Mammary epithelial cell (primary cell): ENCODE measurements at regions of chr20 and their contacts with region 1.

Region 1: GRCh38 chr20:324177-325044 is 941 bp upstream of the SOX12 start:
- DNase-seq: peak; percentile 84
- H3K4me3 ChIP-seq: peak overlapping the region; percentile 63 to 84 (median 63)
- H3K27ac ChIP-seq: peak overlapping the region; percentile 83
- H3K4me1 ChIP-seq: peaks cover 26% of the 10 kb centered on the region
- H3K27me3 ChIP-seq: no peaks in the 10 kb centered on the region
- CTCF ChIP-seq: peak in 1 of 2 donors; percentile 35

Region 2: DNA sequence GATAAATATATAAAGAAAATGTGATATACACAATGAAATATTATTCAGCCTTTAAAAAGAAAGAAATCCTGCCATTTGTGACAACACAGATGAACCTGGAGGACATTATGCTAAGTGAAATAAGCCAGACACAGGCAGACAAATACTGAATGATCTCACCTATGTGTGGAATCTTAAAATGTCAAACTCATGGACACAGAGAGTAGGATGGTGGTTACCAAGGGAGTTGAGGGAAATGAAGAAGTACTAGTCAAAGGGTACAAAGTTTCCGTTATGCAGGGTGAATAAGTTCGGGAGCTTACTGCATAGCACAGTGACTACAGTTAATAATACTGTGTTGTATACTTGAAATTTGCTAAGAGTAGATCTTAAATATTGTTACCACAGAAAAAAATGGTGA is 81.5 kb before region 1 on chr20:
- CTCF ChIA-PET with region 1: no interaction called
- dilution Hi-C with region 1: no loop called
- in situ Hi-C with region 1: no loop called
- intact Hi-C with region 1: no loop called
- DNase-seq: no peak
- H3K4me3 ChIP-seq: no peak overlapping the region
- H3K27ac ChIP-seq: no peak overlapping the region
- H3K4me1 ChIP-seq: peaks cover 1% of the 10 kb centered on the region
- H3K27me3 ChIP-seq: peaks cover 7% of the 10 kb centered on the region
- CTCF ChIP-seq: no peak

Region 3: DNA sequence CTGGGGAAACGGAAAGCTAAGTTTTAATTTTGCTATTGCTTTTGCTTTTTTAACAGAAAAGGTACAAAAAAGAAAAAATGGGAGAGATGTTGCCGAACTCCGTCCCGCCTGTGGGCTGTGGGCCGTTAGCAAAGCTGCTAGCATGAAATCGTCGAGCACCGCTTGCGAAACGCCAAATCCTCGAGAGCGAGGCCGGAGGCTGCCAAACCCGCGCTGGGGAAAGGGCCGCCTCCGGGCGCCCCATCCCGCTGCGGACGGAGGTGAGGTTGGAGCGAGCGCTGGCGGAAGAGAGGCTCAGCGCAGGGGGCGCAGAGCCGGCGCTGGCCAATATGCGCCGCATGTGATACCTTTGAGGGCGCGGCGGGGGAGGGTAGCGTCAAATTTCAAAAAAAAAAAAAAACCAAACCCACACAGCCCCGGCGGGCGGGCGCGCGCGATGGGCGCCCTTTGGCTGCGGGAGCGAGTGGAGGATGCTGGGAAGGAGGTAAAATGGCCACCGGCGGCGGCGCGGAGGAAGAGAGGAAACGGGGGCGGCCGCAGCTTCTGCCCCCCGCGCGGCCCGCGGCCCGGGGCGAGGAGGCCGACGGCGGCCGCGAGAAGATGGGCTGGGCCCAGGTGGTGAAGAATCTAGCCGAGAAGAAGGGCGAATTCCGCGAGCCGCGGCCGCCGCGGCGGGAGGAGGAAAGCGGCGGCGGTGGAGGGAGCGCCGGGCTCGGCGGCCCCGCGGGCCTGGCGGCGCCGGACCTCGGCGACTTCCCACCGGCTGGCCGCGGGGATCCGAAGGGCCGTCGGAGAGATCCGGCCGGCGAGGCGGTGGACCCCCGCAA is 27.1 kb before region 1 on chr20 and contains the start of gene ZCCHC3:
- CTCF ChIA-PET with region 1: no interaction called
- dilution Hi-C with region 1: no loop called
- in situ Hi-C with region 1: no loop called
- intact Hi-C with region 1: loop called (anchors 1 kb)
- DNase-seq: peak; percentile 90
- H3K4me3 ChIP-seq: peak within 1 kb of the TSS; percentile 69 to 84 (median 77)
- H3K27ac ChIP-seq: peak within 1 kb of the TSS; percentile 88
- H3K4me1 ChIP-seq: peaks cover 23% of the 10 kb centered on the region
- H3K27me3 ChIP-seq: no peaks in the 10 kb centered on the region
- CTCF ChIP-seq: peak in 1 of 2 donors; percentile 16
- total RNA-seq, gene ZCCHC3: 9.2 to 11.5 TPM

Region 4: GRCh38 chr20:309841-310644 is 14.4 kb before region 1 on chr20:
- CTCF ChIA-PET with region 1: no interaction called
- dilution Hi-C with region 1: no loop called
- in situ Hi-C with region 1: no loop called
- intact Hi-C with region 1: loop called (anchors 1 kb)
- DNase-seq: peak; percentile 36
- H3K4me3 ChIP-seq: no peak overlapping the region
- H3K27ac ChIP-seq: peak overlapping the region; percentile 17
- H3K4me1 ChIP-seq: peaks cover 23% of the 10 kb centered on the region
- H3K27me3 ChIP-seq: no peaks in the 10 kb centered on the region
- CTCF ChIP-seq: no peak